HEK293 (cell line): ENCODE measurements at regions of chr1 and their contacts with region 1.

Region 1: DNA sequence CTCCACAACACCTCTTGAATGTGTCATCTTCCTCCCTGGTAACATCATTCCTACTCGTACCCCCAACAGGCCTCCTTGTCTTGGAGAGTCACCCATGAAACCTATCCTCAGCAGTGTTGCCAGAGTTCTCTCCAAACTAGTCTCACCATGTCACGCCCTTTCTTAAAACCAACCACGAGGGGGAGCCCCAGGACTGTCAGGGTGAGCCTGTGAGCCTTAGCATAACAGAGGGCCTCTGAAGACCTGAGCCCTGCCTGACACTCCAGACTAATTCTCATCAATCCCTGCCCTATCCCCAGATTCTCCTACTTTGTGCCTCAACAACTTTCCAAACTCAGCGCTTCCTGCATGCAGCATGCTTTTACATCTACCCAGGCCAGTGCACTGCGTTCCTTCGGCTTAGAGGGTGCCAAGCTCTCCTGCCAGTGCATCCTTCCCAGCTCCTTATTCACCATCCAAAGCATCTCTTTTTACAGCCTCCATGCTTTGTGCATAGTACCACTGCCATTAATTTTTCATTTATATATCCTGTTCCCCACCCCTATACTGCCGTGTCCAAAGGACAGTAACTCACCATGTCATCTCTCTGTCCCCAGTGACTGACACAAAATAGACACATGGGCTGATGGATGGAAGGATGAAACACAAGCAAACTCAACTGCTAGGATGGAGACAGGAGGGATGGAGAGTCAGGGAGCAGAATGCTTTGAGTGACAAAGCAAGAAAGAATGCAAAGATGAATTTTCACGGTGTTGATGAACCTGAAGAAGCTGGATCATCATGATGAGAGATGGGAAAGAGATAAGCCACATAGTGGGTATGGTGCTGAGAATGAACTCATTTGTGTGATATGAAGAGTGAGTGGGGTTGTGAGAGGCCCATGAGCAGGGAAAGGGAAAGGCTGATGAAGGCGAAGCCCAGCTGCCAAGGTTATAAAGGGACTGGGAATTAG is 34.0 kb downstream of the ZNF697 start:
- H3K4me3 ChIP-seq: no peak overlapping the region
- H3K27ac ChIP-seq: no peak overlapping the region
- H3K4me1 ChIP-seq: no peaks in the 10 kb centered on the region
- CTCF ChIP-seq: peak; percentile 91

Region 2: DNA sequence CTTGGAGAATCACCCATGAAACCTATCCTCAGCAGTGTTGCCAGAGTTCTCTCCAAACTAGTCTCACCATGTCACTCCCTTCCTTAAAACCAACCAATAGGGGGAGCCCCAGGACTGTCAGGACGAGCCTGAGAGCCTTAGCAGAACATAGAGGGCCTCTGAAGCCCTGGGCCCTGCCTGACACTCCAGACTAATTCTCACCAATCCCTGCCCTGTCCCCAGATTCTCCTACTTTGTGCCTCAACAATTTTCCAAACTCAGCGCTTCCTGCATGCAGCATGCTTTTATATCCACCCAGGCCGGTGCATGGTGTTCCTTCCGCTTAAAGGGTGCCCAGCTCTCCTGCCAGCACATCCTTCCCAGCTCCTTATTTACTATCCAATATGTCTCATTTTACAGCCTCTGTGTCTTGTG is 64.3 kb before region 1 on chr1:
- CTCF ChIA-PET with region 1: interaction called, 14 read pairs
- POLR2A ChIA-PET with region 1: no interaction called
- H3K4me3 ChIP-seq: no peak overlapping the region
- H3K27ac ChIP-seq: no peak overlapping the region
- H3K4me1 ChIP-seq: peaks cover 9% of the 10 kb centered on the region
- CTCF ChIP-seq: peak; percentile 66

Region 3: DNA sequence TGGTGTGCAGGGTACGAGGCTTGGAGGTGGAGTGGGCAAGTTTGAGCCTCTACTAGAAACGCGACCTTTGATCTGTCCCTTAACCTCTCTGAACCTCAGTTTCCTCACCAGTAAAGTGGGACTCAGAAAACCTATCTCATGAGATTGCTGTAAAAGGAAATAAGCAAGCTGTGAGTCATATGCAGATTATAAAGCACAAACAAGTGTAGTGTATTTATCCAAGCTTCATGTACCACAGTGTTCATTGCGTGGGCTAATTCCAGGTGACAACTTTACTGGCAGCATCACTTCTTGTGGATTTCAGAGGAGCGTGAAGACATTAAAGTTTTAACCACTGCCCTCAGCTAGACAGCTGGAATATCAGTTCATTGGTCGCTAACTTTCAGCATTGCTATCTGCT is 10.3 kb before region 1 on chr1:
- CTCF ChIA-PET with region 1: interaction called, 11 read pairs
- POLR2A ChIA-PET with region 1: no interaction called
- H3K4me3 ChIP-seq: no peak overlapping the region
- H3K27ac ChIP-seq: no peak overlapping the region
- H3K4me1 ChIP-seq: no peaks in the 10 kb centered on the region
- CTCF ChIP-seq: no peak

Region 4: DNA sequence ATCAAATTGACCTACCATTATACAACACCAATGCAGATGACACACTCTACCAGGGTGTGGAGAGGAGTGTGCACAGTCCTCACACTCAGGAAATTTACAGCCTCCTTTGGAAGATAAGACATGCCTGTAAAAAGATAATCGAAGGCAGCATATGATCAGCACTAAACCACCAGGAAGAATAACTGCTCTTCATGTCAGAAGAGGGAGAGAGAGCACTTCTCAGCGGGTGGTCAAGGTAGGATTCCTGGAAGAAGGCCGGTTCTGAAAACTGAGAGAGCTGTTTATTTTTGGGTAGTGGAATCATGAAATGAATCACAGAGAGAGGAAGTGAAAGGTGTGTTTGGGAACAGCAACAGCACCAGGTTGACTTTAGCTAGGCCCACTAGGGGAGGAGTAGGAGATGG is 48.0 kb after region 1 on chr1:
- CTCF ChIA-PET with region 1: interaction called, 190 read pairs
- POLR2A ChIA-PET with region 1: no interaction called
- H3K4me3 ChIP-seq: no peak overlapping the region
- H3K27ac ChIP-seq: no peak overlapping the region
- H3K4me1 ChIP-seq: no peaks in the 10 kb centered on the region
- CTCF ChIP-seq: no peak